ENCODE measurements at regions of chr4 and their contacts with region 1.

Region 1: GRCh38 chr4:186104114-186104889 is at the start of gene FAM149A:
- DNase-seq: no peak
- H3K4me3 ChIP-seq: peak within 1 kb of the TSS; percentile 57 to 79 (median 60)
- H3K27ac ChIP-seq: peak within 1 kb of the TSS in 1 of 2 donors; percentile 33
- H3K4me1 ChIP-seq: no peaks in the 10 kb centered on the region
- H3K27me3 ChIP-seq: peaks cover 4 to 5% of the 10 kb centered on the region in 2 donors
- CTCF ChIP-seq: no peak
- POLR2A ChIP-seq: no peak
- total RNA-seq, gene FAM149A: 7.9 to 22.9 (median 8.0) TPM

Region 2: DNA sequence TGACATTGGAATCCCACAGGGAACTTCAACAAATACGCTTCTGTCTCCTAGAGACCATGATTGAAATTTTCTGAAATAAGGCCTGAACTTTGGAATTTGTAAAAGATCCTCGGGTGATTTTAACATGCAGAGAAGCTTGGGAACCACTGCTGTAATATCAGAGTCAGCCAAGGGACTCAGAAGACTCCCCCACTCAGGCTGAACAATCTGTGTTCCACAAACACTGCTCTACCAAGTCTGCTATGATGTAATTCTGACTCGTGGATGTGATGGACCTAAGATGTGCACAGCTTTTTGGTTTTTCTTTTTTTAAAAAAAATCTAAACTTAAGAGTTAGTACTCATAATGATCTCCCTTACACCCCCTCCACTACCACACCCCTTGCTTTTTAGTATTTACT is 734.6 kb before region 1 on chr4:
- intact Hi-C with region 1: no loop called
- DNase-seq: no peak
- H3K4me3 ChIP-seq: no peak overlapping the region
- H3K27ac ChIP-seq: no peak overlapping the region
- H3K4me1 ChIP-seq: no peaks in the 10 kb centered on the region
- H3K27me3 ChIP-seq: no peaks in the 10 kb centered on the region
- CTCF ChIP-seq: no peak
- POLR2A ChIP-seq: no peak

Region 3: DNA sequence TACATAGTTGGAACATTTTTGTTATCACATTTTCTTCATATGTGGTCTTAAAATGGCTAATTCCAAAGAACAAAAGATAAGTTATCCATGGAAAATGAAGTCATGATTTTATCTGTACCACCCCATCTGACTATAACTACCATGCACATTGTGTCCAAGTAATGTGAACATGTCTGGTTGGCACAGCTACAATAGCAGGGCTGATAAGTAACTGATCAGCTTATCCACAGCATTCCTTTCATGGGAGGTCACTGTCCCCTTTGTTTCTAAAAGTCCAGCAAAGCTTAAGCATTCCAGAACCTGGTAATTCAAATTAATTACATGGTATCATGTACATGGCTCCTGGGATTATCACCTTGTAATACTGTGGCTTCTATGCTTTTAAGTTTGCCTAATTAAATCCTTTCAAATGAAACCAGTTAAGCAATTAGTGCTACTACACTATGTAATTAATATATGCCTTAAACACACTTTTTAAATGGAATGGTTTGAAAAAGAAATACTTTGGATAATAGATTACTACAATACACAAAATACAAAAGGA is 271.2 kb before region 1 on chr4:
- intact Hi-C with region 1: no loop called
- DNase-seq: no peak
- H3K4me3 ChIP-seq: no peak overlapping the region
- H3K27ac ChIP-seq: no peak overlapping the region
- H3K4me1 ChIP-seq: no peaks in the 10 kb centered on the region
- H3K27me3 ChIP-seq: no peaks in the 10 kb centered on the region
- CTCF ChIP-seq: no peak
- POLR2A ChIP-seq: no peak

Region 4: DNA sequence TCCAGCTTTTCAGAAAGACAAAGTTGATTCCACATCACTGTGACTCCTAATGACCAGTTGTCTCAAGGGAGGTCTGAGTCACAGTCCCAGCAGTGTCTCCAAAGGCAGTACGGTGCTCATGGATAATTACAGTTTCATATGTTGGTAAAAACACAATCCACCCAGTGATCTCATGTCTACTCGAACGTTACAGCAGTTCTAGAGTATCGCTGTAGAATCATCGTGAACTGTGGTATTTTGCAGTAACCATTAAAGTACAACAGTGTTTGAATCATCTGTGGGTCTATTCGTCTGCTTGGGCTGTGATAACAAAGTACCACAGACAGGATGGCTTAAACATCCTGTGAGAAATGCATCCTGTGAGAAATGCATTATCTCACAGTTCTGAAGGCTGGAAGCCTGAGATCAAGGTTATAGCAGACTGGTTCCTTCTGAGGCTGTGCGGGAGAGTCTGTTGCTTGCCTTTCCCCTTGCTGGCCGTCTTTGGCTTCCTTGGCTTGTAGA is 171.2 kb before region 1 on chr4:
- intact Hi-C with region 1: no loop called
- DNase-seq: no peak
- H3K4me3 ChIP-seq: no peak overlapping the region
- H3K27ac ChIP-seq: no peak overlapping the region
- H3K4me1 ChIP-seq: no peaks in the 10 kb centered on the region
- H3K27me3 ChIP-seq: no peaks in the 10 kb centered on the region
- CTCF ChIP-seq: no peak
- POLR2A ChIP-seq: no peak

Region 5: DNA sequence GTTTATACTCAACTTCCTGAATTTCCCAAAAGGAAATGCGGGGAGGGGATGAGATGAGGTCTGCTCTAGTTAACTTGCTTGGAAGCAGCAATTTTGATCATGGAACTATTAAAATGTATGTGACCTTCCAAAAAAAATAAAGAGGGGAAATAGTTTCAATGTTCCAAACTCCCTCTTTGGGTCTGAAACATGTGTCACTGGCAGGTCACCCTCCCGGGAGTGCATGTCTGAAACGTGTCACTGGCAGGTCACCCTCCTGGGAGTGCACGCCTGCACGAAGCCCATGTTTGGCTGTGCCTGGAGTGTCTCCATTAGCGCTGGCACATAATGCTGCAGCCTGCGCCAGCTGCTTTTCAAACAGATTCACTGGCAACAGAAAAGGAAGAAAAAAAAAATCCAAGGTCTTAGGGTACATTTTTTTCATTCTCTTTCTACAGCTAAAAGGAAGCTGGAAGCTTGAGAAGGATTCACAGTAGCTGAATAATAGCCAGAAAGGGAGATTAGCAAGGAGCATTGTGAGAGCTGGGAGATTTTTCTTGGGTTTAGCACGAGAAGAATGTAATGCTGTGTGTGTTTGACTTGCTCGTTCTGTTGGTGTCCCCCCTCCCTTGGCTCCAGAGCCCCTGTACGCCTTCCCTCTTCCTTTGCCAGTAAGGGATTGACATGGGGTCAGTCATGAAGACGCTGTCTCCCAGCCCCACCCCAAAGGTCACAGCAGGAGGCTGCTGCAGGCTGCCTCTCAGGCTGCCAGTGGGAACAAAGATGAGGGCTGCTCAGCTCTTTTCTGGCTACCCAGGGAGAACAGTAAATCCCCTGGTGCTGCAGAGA is 74.5 kb before region 1 on chr4:
- intact Hi-C with region 1: loop called (anchors 2 kb)
- DNase-seq: peak; percentile 58 to 76
- H3K4me3 ChIP-seq: peak overlapping the region in 2 of 3 donors; percentile 32 to 49
- H3K27ac ChIP-seq: peak overlapping the region; percentile 67 to 80
- H3K4me1 ChIP-seq: peaks cover 3 to 8% of the 10 kb centered on the region in 2 donors
- H3K27me3 ChIP-seq: no peaks in the 10 kb centered on the region
- CTCF ChIP-seq: no peak
- POLR2A ChIP-seq: no peak

Region 6: GRCh38 chr4:186414390-186414789 is 310.1 kb after region 1 on chr4:
- intact Hi-C with region 1: loop called (anchors 5 kb)
- DNase-seq: no peak
- H3K4me3 ChIP-seq: no peak overlapping the region
- H3K27ac ChIP-seq: no peak overlapping the region
- H3K4me1 ChIP-seq: no peaks in the 10 kb centered on the region
- H3K27me3 ChIP-seq: no peaks in the 10 kb centered on the region
- CTCF ChIP-seq: no peak
- POLR2A ChIP-seq: no peak

Measured in breast epithelium (tissue), 4 donors.